ENCODE measurements at regions of chr16 and their contacts with region 1.

Region 1: GRCh38 chr16:12095275-12096156 is 119.0 kb downstream of the SNX29 start:
- DNase-seq: peak; percentile 65 to 80 (median 68)
- ATAC-seq: peak; percentile 30 to 75 (median 60)
- H3K4me3 ChIP-seq: peak overlapping the region in 9 of 12 donors; percentile 0 to 51 (median 34)
- H3K27ac ChIP-seq: peak overlapping the region in 5 of 12 donors; percentile 21 to 40 (median 32)
- H3K4me1 ChIP-seq: peaks cover 2 to 47% (median 33%) of the 10 kb centered on the region in 12 donors
- H3K27me3 ChIP-seq: no peaks in the 10 kb centered on the region
- CTCF ChIP-seq: peak; percentile 86 to 97 (median 94)
- POLR2A ChIP-seq: no peak

Region 2: DNA sequence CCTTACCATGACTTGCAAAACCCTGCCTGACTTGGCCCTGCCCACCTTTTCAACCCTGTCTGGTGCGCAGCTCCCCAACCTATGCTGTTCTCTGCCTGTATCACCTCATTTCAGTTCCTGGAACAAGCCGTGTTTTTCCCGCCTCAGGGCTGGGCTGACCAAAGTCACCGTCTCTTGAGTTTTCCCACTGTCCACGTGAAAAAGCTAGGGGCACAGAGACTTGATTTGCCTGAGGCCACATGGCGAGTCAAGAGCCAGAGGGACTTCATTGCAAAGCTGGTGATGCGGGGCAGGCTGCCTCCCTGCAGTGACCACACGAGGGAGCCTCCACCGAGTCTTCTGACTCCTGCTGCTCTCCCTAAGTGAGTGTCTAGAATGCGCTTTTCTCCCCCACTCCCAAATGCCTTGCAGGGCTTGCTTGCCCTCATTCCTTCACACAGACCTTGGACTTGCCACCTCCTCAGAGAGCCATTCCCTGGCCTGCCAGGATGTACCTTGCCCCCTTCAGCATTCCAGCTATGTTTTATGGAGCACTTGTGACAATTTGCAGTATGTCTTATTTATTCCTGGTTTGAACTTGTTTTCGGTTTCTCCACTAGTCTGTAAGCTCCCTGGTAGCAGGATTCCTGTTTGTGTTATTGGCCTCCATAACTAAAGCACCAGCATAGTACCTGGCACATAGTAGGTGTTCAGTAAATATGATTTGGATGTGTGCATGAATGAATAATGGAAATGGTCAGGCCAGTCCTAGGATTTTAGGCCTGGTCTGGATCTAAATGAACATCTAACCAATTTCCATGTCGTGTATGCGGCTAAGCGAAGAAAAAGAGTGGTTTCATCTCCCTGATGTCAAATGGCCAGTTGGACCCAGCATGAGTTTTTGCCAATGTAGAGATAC is 133.3 kb after region 1 on chr16:
- intact Hi-C with region 1: loop called in 3 of 10 experiments (anchors 5 to 10 kb)
- DNase-seq: peak in 4 of 5 donors; percentile 30 to 49 (median 36)
- ATAC-seq: peak; percentile 60 to 82 (median 80)
- H3K4me3 ChIP-seq: no peak overlapping the region
- H3K27ac ChIP-seq: no peak overlapping the region
- H3K4me1 ChIP-seq: peaks cover 0 to 6% (median 0%) of the 10 kb centered on the region in 12 donors
- H3K27me3 ChIP-seq: no peaks in the 10 kb centered on the region
- CTCF ChIP-seq: peak; percentile 39 to 73 (median 58)
- POLR2A ChIP-seq: no peak

Region 3: GRCh38 chr16:12271006-12271405 is 175.5 kb after region 1 on chr16:
- intact Hi-C with region 1: loop called in 3 of 10 experiments (anchors 5 to 10 kb)
- DNase-seq: no peak
- ATAC-seq: peak; percentile 51 to 68 (median 60)
- H3K4me3 ChIP-seq: no peak overlapping the region
- H3K27ac ChIP-seq: no peak overlapping the region
- H3K4me1 ChIP-seq: no peaks in the 10 kb centered on the region
- H3K27me3 ChIP-seq: no peaks in the 10 kb centered on the region
- CTCF ChIP-seq: peak in 7 of 12 donors; percentile 9 to 47 (median 35)
- POLR2A ChIP-seq: no peak

Region 4: GRCh38 chr16:12323007-12323758 is 227.7 kb after region 1 on chr16:
- intact Hi-C with region 1: loop called in 1 of 10 experiments (anchors 10 kb)
- DNase-seq: no peak
- ATAC-seq: no peak
- H3K4me3 ChIP-seq: no peak overlapping the region
- H3K27ac ChIP-seq: peak overlapping the region in 1 of 12 donors; percentile 30
- H3K4me1 ChIP-seq: peaks cover 0 to 9% (median 0%) of the 10 kb centered on the region in 12 donors
- H3K27me3 ChIP-seq: no peaks in the 10 kb centered on the region
- CTCF ChIP-seq: no peak
- POLR2A ChIP-seq: no peak

Region 5: DNA sequence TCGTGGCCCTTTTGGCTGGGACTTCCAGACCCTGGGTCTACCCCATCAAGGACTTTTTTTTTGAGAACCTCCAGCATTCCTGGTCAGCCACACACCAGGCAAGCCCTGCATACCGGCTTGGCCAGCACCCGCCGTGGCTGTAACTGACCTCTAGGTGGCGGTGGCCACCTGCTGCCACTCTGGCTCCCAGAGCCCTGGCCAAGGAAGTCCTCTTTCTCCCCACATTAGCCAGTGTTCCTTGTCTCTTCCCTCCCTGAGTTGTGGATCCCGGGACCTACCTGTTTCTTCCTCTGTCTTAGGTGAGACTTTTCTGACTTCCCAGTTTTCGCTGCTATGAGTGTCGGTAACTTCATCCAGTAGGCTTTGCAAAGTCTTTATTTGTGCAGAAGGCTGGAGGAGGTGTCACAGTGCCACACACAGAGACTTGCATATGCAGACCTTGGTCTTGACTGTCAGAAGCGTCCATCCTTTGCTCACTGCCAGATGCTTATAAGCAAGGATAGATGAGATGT is 359.8 kb after region 1 on chr16:
- intact Hi-C with region 1: loop called in 1 of 10 experiments (anchors 10 kb)
- DNase-seq: peak; percentile 50 to 75 (median 59)
- ATAC-seq: peak; percentile 54 to 86 (median 84)
- H3K4me3 ChIP-seq: no peak overlapping the region
- H3K27ac ChIP-seq: no peak overlapping the region
- H3K4me1 ChIP-seq: peaks cover 0 to 20% (median 0%) of the 10 kb centered on the region in 12 donors
- H3K27me3 ChIP-seq: no peaks in the 10 kb centered on the region
- CTCF ChIP-seq: peak; percentile 73 to 91 (median 85)
- POLR2A ChIP-seq: no peak

Region 6: GRCh38 chr16:12819126-12820117 is 723.9 kb after region 1 on chr16:
- intact Hi-C with region 1: loop called in 9 of 10 experiments (anchors 5 to 10 kb)
- DNase-seq: peak; percentile 47 to 81 (median 58)
- ATAC-seq: peak in 3 of 4 donors; percentile 59 to 69 (median 69)
- H3K4me3 ChIP-seq: no peak overlapping the region
- H3K27ac ChIP-seq: no peak overlapping the region
- H3K4me1 ChIP-seq: peaks cover 0 to 21% (median 0%) of the 10 kb centered on the region in 12 donors
- H3K27me3 ChIP-seq: peaks cover 0 to 5% (median 0%) of the 10 kb centered on the region in 9 donors
- CTCF ChIP-seq: peak; percentile 70 to 89 (median 80)
- POLR2A ChIP-seq: no peak

Measured in heart left ventricle (tissue), 16 donors.